ENCODE measurements at regions of chr7 and their contacts with region 1.

Region 1: DNA sequence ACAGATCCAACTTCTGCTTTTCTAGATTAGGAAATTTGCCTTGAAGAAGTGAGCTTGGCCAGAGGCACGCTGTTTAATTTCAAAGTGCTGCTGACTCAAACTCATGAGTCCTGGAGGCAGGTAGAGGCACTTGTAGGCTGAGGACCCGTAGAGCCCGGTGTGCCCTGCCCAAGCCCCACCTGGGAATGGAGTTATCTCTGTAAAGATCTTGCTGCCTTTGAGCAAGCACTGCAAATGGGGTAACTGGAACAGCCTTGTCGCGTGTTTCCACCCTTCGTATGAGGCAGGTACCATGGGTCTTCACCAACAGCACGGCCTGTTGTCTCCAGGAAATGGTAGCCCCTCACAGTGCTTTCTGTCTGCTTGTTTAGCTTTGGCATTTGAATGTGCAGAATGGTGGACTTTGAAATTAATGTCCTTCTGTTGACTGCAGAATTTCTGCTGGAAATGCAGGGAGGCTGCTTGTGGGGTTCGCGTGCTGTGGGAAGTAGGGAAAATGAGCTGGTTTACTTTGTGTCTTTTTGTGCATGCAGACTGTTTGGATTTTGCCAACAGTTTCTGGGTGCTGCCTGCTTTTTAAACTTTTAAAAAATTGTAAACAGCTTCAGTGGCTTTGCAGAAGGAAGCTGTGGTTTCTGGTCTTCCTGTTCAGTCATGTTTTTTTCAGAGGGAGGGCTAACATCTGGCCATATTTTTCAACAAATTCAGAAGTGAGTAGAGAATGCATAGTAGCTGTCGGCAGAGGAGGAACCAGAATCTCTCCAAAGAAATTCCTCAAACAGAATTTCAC is 27.2 kb downstream of the CCM2 start:
- DNase-seq: peak; percentile 64
- ATAC-seq: peak; percentile 82
- H3K4me3 ChIP-seq: no peak overlapping the region
- H3K27ac ChIP-seq: peak overlapping the region; percentile 74; the same call in 1 of the 2 replicates
- H3K4me1 ChIP-seq: peaks cover 8% of the 10 kb centered on the region
- H3K27me3 ChIP-seq: no peaks in the 10 kb centered on the region
- CTCF ChIP-seq: no peak
- POLR2A ChIP-seq: no peak
- RAD21 ChIP-seq: no peak

Region 2: GRCh38 chr7:44999245-45000095 is 27.7 kb before region 1 on chr7:
- CTCF ChIA-PET with region 1: interaction called, 4 read pairs
- POLR2A ChIA-PET with region 1: interaction called, 11 read pairs
- dilution Hi-C with region 1: no loop called
- in situ Hi-C with region 1: no loop called
- intact Hi-C with region 1: no loop called
- DNase-seq: peak; percentile 99
- ATAC-seq: peak; percentile 95
- H3K4me3 ChIP-seq: peak overlapping the region; percentile 88
- H3K27ac ChIP-seq: peak overlapping the region; percentile 81
- H3K4me1 ChIP-seq: peaks cover 5% of the 10 kb centered on the region
- H3K27me3 ChIP-seq: no peaks in the 10 kb centered on the region
- CTCF ChIP-seq: no peak
- POLR2A ChIP-seq: no peak
- RAD21 ChIP-seq: peak; percentile 2; the same call in 1 of the 2 replicates